Endothelial cell of umbilical vein (primary cell): ENCODE measurements at regions of chr11 and their contacts with region 1.

Region 1: GRCh38 chr11:96207459-96208449 is 135.2 kb downstream of the MAML2 start:
- DNase-seq: peak; percentile 89
- H3K4me3 ChIP-seq: peak overlapping the region in 1 of 3 experiments; percentile 42
- H3K27ac ChIP-seq: peak overlapping the region; percentile 94
- H3K4me1 ChIP-seq: peaks cover 48% of the 10 kb centered on the region
- H3K27me3 ChIP-seq: no peaks in the 10 kb centered on the region
- CTCF ChIP-seq: no peak
- POLR2A ChIP-seq: peak; percentile 72

Region 2: DNA sequence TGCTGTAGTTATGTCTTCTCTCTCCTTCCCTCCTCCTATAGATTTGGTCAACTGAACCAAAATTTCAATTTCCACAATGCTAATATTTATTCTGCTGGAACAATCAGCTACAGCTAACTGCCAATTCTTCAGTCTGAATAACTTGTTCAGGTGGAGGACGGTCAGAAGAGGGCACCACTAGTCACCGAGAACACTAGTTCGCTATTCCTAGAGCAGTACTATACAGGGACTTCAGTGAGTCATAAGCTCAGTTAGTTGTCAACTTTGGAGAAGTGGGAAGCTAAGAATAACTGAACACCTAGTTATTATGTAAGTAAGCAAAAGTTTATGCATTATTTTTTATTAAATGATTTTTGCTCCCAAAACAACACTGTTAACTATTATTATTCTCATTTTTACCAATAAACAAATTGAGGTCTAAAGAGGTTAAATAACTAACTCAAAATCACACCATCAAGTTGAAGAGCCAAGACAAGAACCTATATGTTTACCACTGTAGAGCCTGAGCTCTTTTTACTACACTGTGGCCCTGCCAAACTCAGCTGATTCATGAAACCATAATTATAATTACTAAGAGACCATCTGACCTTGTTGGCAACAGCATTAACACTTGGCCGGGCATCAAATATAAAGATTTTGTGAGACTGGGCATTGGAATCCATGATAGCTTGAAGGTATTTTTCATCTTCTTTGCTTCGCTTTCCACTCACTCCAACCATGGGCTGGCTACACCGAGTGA is 358.5 kb before region 1 on chr11:
- CTCF ChIA-PET with region 1: no interaction called
- POLR2A ChIA-PET with region 1: no interaction called
- dilution Hi-C with region 1: no loop called
- intact Hi-C with region 1: no loop called
- DNase-seq: peak; percentile 82
- H3K4me3 ChIP-seq: no peak overlapping the region
- H3K27ac ChIP-seq: no peak overlapping the region
- H3K4me1 ChIP-seq: no peaks in the 10 kb centered on the region
- H3K27me3 ChIP-seq: no peaks in the 10 kb centered on the region
- CTCF ChIP-seq: peak; percentile 46 to 54
- POLR2A ChIP-seq: no peak

Region 3: DNA sequence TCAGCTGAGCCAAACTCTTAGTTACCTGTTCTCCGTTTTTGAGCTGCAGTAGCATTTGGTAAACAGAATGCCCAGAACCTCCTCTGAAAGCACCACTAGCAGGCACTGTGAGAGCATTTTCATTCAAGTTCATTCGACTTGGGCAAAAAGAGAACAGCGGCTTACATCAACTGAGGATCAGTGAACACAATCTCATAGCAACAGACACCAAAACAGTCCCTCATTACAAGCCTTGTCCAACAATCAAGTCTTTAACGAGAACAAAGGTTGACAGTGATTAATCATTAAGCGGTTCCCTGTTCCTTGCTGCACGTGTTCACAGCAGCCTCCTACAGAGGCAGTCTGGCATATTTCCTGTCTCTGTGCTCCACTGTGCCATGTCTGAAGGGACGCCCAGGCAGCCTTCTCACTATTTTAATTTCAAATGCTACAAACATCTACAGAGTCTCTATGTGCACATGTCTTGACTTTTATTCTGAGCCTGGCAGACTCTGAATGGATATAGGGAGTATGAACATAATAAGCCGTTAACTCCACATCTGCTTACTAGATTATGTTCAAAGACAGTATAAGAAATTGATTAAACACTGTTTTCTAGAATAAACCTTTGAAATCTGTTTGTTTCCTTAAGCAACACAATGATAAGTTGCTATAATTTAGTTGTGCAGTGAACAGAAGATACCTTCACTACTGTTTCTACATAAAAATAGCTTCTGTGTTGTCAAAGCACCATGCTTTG is 195.5 kb before region 1 on chr11:
- CTCF ChIA-PET with region 1: no interaction called
- POLR2A ChIA-PET with region 1: no interaction called
- dilution Hi-C with region 1: no loop called
- intact Hi-C with region 1: loop called (anchors 5 kb)
- DNase-seq: peak; percentile 85
- H3K4me3 ChIP-seq: no peak overlapping the region
- H3K27ac ChIP-seq: no peak overlapping the region
- H3K4me1 ChIP-seq: peaks cover 8% of the 10 kb centered on the region
- H3K27me3 ChIP-seq: no peaks in the 10 kb centered on the region
- CTCF ChIP-seq: peak; percentile 50 to 58
- POLR2A ChIP-seq: no peak

Region 4: GRCh38 chr11:96162816-96163499 is 44.8 kb before region 1 on chr11:
- CTCF ChIA-PET with region 1: interaction called, 10 read pairs
- POLR2A ChIA-PET with region 1: no interaction called
- dilution Hi-C with region 1: no loop called
- intact Hi-C with region 1: loop called (anchors 1 kb)
- DNase-seq: peak; percentile 93
- H3K4me3 ChIP-seq: no peak overlapping the region
- H3K27ac ChIP-seq: peak overlapping the region; percentile 80
- H3K4me1 ChIP-seq: peaks cover 31% of the 10 kb centered on the region
- H3K27me3 ChIP-seq: no peaks in the 10 kb centered on the region
- CTCF ChIP-seq: no peak
- POLR2A ChIP-seq: no peak